CD4-positive, alpha-beta T cell (primary cell): ENCODE measurements at regions of chr7 and their contacts with region 1.

Region 1: DNA sequence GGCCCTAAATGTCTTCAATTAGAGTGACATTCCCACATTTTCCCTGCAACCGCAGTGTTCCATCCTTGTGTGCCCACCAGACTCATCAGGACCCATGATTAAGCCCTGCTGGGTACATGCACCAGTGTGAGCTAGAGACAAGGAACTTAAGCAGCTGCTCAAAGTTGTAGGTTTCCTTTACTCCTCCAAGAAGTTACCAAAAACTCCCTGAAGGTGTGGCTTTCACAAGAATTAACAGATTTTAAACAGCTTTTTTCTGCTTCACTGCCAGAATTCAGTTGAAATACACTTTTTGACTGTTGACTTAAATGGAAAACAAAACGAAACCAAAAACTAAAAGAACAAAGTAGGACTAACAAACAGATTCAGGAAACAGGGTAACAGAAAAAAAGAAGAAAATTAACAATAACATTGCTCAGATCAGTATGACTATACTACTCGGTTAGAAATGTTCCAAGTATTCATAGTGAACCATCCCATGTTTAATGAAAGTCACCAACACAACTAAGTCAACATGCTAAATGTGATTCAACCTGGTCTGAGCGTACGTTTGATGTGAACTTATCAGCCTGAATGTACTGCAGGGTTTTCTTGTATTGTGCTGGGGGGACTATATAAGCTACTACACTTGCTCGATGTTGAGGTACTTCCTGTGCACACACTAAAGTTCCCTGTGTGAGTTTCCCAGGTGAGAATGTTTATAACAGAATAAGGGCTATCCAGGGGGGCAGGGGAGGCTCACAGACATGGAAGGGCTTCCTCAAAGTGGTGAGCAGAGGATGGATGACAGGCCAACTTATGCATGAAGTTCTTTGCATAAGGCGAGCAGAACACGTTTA is 22.2 kb downstream of the SLC37A3 start:
- DNase-seq: peak in 6 of 14 experiments; percentile 8 to 57 (median 32)
- ATAC-seq: peak; percentile 93
- H3K4me3 ChIP-seq: peak overlapping the region; percentile 44
- H3K4me3 Mint-ChIP-seq: peak overlapping the region; percentile 89
- H3K27ac ChIP-seq: peak overlapping the region; percentile 3 to 79
- H3K27ac Mint-ChIP-seq: peak overlapping the region; percentile 96
- H3K4me1 ChIP-seq: peaks cover 22% of the 10 kb centered on the region
- H3K4me1 Mint-ChIP-seq: peaks cover 12% of the 10 kb centered on the region
- H3K27me3 ChIP-seq: no peaks in the 10 kb centered on the region
- H3K27me3 Mint-ChIP-seq: no peaks in the 10 kb centered on the region
- CTCF ChIP-seq: no peak

Region 2: DNA sequence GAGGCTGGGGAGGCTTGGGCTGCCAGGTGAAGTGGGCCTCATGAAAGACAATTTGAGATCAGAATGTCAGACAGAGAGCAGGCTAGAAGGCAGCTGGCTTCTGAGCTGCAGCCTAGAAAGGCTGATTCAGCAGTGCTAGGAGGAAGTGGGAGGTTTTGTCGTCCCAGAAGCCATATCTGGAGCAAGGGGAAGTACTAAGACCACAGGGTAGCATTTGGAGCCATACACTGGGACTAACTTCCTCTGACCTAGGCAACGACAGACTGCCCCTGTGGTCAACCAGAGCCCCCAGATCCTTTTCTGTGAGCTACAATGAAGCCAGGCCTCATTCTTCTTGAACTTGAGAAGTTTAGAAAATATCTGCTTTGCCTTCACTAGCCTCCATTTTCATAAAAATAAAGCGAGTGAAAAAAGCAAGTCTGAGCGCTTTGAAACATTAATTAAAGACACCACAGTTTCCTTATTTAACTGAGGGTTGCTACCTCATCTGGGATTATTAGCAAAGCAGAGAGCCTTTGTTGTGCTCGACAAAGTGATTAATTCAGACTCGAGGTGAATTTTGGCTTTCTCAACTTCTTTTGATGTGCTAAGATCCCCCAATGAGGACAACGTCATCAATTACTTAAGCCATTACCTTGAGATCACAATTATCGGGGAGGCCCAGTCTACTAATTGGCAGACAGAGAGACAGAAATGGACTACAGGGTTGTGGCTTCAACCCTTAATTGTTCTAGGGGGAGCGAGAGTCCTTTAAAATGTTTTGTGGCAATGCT is 520.4 kb before region 1 on chr7:
- CTCF ChIA-PET with region 1: no interaction called
- POLR2A ChIA-PET with region 1: no interaction called
- intact Hi-C with region 1: no loop called
- DNase-seq: peak in 4 of 14 experiments; percentile 23 to 61 (median 54)
- ATAC-seq: peak; percentile 56
- H3K4me3 ChIP-seq: no peak overlapping the region
- H3K4me3 Mint-ChIP-seq: no peak overlapping the region
- H3K27ac ChIP-seq: peak overlapping the region in 1 of 2 donors; percentile 41
- H3K27ac Mint-ChIP-seq: peak overlapping the region; percentile 67
- H3K4me1 ChIP-seq: peaks cover 29% of the 10 kb centered on the region
- H3K4me1 Mint-ChIP-seq: peaks cover 36% of the 10 kb centered on the region
- H3K27me3 ChIP-seq: no peaks in the 10 kb centered on the region
- H3K27me3 Mint-ChIP-seq: no peaks in the 10 kb centered on the region
- CTCF ChIP-seq: no peak

Region 3: DNA sequence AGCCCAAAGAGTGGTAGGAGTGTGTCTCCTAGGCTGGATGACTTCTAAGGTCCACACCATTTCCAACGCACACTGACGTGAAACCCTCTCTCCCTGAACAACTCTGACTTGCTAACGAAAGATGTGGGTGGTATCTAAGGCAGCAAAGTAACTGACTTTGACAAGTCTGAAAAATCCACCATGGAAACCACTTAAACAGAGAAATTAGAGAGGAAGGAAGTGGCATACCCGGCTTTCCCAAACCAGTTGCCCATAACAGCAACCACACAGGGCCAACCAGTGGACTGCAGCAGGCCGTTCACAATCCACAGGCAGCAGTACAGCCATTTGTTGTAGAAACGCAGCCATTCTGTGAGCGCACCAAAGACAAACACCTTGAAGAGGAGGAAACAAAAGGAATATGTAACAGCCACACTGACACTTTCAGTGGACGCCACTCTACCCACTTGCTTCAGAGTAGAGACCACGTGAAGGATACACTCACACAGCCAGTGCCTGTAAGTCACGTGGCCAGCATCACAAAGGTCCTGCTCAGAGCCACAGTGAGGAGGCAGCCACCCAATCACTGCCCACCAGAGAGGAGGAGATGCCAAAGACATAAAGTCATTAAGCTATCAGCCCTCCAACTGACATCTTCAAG is 17.6 kb before region 1 on chr7:
- CTCF ChIA-PET with region 1: no interaction called
- POLR2A ChIA-PET with region 1: interaction called, 17 read pairs
- intact Hi-C with region 1: no loop called
- DNase-seq: peak in 6 of 14 experiments; percentile 5 to 58 (median 26)
- ATAC-seq: peak; percentile 45
- H3K4me3 ChIP-seq: peak overlapping the region; percentile 45
- H3K4me3 Mint-ChIP-seq: peak overlapping the region; percentile 65
- H3K27ac ChIP-seq: peak overlapping the region in 1 of 2 donors; percentile 14
- H3K27ac Mint-ChIP-seq: peak overlapping the region; percentile 60
- H3K4me1 ChIP-seq: peaks cover 24% of the 10 kb centered on the region
- H3K4me1 Mint-ChIP-seq: peaks cover 27% of the 10 kb centered on the region
- H3K27me3 ChIP-seq: no peaks in the 10 kb centered on the region
- H3K27me3 Mint-ChIP-seq: no peaks in the 10 kb centered on the region
- CTCF ChIP-seq: no peak

Region 4: GRCh38 chr7:140397784-140398750 is 22.0 kb after region 1 on chr7 and contains the start of gene SLC37A3:
- CTCF ChIA-PET with region 1: no interaction called
- POLR2A ChIA-PET with region 1: interaction called, 18 read pairs
- intact Hi-C with region 1: no loop called
- DNase-seq: peak; percentile 75 to 91 (median 84)
- ATAC-seq: peak; percentile 98
- H3K4me3 ChIP-seq: peak within 1 kb of the TSS; percentile 79
- H3K4me3 Mint-ChIP-seq: peak within 1 kb of the TSS; percentile 86
- H3K27ac ChIP-seq: peak within 1 kb of the TSS in 1 of 2 donors; percentile 53
- H3K27ac Mint-ChIP-seq: peak within 1 kb of the TSS; percentile 64
- H3K4me1 ChIP-seq: peaks cover 22% of the 10 kb centered on the region
- H3K4me1 Mint-ChIP-seq: peaks cover 33% of the 10 kb centered on the region
- H3K27me3 ChIP-seq: no peaks in the 10 kb centered on the region
- H3K27me3 Mint-ChIP-seq: no peaks in the 10 kb centered on the region
- CTCF ChIP-seq: no peak
- total RNA-seq, gene SLC37A3: 23.5 to 25.6 TPM

Region 5: DNA sequence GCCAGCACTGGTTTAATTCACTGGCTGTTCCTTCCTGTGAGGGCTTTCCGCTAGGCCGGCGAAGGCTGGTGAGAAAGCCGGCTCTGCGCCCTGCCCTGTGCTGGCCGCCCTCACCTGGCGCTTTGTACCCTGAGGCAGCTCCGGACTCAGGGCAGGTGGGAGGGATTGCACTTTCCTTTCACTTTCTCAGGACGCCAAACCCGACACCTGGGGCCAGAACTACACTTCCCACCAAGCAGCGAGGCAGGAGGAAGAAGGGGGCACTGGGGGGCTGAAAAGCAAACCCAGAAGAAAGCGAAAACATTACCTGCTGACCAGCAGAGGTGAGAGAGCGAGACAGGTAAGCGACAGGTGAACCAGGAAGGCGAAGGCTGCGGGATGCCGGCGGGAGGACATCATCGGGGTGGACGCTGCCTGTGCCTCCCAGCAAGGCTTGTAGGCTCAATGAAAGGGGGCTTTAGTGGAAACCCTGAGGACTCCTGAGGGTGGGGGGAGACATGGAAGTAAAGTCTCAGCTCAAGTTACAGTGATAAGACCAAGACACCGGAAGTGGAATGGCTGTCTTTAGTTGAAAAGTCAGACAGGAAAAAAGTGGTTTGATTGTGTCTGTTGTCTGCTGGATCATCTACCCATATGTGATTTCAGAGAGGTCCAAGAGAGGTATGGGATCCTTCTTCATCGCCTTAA is 27.9 kb after region 1 on chr7 and contains the start of gene RAB19:
- CTCF ChIA-PET with region 1: no interaction called
- POLR2A ChIA-PET with region 1: interaction called, 18 read pairs
- intact Hi-C with region 1: no loop called
- DNase-seq: peak; percentile 20 to 77 (median 45)
- ATAC-seq: peak; percentile 86
- H3K4me3 ChIP-seq: peak within 1 kb of the TSS; percentile 86
- H3K4me3 Mint-ChIP-seq: peak within 1 kb of the TSS; percentile 96
- H3K27ac ChIP-seq: peak within 1 kb of the TSS; percentile 79 to 80
- H3K27ac Mint-ChIP-seq: peak within 1 kb of the TSS; percentile 97
- H3K4me1 ChIP-seq: peaks cover 20% of the 10 kb centered on the region
- H3K4me1 Mint-ChIP-seq: peaks cover 25% of the 10 kb centered on the region
- H3K27me3 ChIP-seq: no peaks in the 10 kb centered on the region
- H3K27me3 Mint-ChIP-seq: no peaks in the 10 kb centered on the region
- CTCF ChIP-seq: no peak
- total RNA-seq, gene RAB19: 1.6 to 2.8 TPM